ENCODE measurements at regions of chr18 and their contacts with region 1.

Region 1: DNA sequence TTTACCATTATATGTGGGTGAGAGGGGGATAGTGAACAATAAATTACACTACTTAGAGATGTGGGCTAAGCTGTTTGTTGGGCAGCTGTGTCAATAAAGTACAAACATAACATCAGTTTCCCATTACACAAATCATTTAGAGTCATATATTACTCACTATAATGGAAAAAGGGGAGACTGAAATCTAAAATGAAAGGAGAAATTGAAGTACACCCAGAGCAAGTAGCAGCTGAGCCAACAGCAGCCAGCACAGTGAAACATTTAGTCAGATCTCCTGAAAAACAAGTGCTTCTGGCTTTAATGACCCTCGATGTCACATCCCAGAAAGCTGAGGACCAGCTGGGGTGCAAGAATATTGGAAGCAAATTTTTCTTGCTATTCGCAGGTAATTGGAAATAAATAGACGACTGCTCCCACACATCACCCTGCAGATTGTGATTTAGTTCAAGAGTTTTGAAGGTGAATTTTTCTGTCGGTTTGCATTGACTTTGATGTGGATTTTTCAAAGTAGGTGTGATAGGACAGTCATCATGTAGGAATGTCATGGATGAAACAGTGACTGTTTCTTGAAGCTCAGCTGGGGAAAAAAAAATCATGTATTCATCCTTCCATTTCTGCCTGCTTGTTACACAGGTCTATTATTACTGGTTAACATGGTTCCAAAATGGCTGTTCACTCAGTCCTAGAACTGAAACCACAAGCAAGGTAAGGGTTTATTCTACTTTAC is 1607.3 kb upstream of the CELF4 start:
- DNase-seq: no peak
- H3K4me3 ChIP-seq: no peak overlapping the region
- H3K4me3 Mint-ChIP-seq: no peak overlapping the region
- H3K27ac Mint-ChIP-seq: no peak overlapping the region
- H3K4me1 ChIP-seq: no peaks in the 10 kb centered on the region
- H3K4me1 Mint-ChIP-seq: no peaks in the 10 kb centered on the region
- H3K27me3 ChIP-seq: no peaks in the 10 kb centered on the region
- H3K27me3 Mint-ChIP-seq: no peaks in the 10 kb centered on the region
- CTCF ChIP-seq: no peak

Region 2: DNA sequence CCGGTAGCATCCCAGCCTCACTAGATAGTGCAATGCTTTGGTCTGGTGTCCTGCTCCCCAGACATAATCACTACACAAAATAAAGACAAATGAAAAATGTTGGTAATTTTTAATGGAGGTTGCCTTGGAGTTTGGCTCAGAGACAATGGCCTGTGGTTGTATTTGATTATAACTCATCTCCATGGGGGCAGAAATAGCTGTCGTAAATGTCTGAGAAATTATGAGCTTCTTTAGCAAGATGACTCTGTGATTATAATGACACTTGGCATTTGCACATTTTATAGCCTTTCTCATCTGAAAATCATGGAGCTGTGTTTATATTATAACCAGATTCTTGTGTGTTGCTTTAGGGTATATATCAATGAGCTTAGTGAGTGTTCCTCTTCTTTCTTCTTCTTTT is 172.5 kb after region 1 on chr18:
- CTCF ChIA-PET with region 1: no interaction called
- POLR2A ChIA-PET with region 1: no interaction called
- intact Hi-C with region 1: loop called (anchors 10 kb)
- DNase-seq: no peak
- H3K4me3 ChIP-seq: no peak overlapping the region
- H3K4me3 Mint-ChIP-seq: no peak overlapping the region
- H3K27ac Mint-ChIP-seq: peak overlapping the region; percentile 10
- H3K4me1 ChIP-seq: peaks cover 13% of the 10 kb centered on the region
- H3K4me1 Mint-ChIP-seq: peaks cover 7% of the 10 kb centered on the region
- H3K27me3 ChIP-seq: no peaks in the 10 kb centered on the region
- H3K27me3 Mint-ChIP-seq: no peaks in the 10 kb centered on the region
- CTCF ChIP-seq: no peak